G401 (cell line): ENCODE measurements at regions of chr14 and their contacts with region 1.

Region 1: GRCh38 chr14:59126710-59127432 is 61.6 kb upstream of the DAAM1 start:
- DNase-seq: peak; percentile 79

Region 2: DNA sequence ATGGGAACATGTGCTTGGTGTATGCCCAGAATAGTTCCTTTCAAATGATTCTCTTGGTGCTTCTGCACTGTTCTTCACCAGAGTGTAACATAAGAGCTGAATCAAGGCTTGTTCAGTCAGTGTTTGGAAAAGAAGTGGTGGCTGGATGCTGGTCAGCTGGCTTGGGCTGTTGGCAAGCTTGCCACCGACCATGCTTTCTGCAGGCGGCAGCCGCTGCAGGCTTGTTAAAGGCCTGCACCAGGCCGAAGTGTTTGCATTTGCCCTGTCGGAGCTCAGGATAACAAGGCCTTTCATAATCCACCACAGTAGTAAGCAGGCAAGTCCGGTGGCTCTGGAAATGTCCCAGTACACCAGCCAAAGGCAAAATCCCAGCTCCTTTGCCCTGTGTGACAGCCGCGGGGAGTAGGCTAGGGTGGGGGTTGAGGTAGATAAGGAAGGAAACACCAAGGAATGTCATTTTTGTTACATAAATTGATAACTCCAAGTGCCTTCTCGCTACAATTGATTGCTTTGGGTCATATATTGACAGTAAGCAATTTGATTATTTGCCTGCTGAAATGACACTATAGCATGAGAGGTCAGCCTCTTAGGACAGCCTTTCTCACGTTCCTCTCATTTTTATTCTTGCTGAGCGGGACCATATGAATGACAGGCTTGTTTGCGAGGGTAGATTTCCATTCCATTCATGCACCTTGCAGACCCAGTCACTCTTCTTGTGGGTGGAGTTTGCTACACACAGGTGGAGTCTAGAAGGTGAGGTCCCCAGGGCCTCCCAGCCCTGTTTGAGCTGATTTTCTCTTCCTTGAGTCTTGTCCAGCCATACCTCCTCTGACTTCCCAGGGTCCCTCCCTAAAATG is 88.7 kb after region 1 on chr14:
- in situ Hi-C with region 1: no loop called
- DNase-seq: peak; percentile 86

Region 3: GRCh38 chr14:59228421-59228820 is 101.5 kb after region 1 on chr14:
- in situ Hi-C with region 1: no loop called
- DNase-seq: no peak

Region 4: GRCh38 chr14:59454131-59454530 is 327.3 kb after region 1 on chr14:
- in situ Hi-C with region 1: loop called (anchors 10 kb)
- DNase-seq: no peak